ENCODE measurements at regions of chr4 and their contacts with region 1.

Region 1: GRCh38 chr4:105471566-105472176 is 2.2 kb downstream of the PPA2 start:
- DNase-seq: peak; percentile 38 to 87 (median 70)
- ATAC-seq: peak; percentile 25
- H3K4me3 ChIP-seq: no peak overlapping the region
- H3K4me3 Mint-ChIP-seq: peak overlapping the region; percentile 56
- H3K27ac ChIP-seq: no peak overlapping the region
- H3K27ac Mint-ChIP-seq: peak overlapping the region; percentile 38
- H3K4me1 ChIP-seq: peaks cover 32% of the 10 kb centered on the region
- H3K4me1 Mint-ChIP-seq: peaks cover 58% of the 10 kb centered on the region
- H3K27me3 ChIP-seq: no peaks in the 10 kb centered on the region
- H3K27me3 Mint-ChIP-seq: no peaks in the 10 kb centered on the region
- CTCF ChIP-seq: peak; percentile 74

Region 2: GRCh38 chr4:104868958-104869357 is 602.7 kb before region 1 on chr4:
- CTCF ChIA-PET with region 1: no interaction called
- POLR2A ChIA-PET with region 1: no interaction called
- intact Hi-C with region 1: loop called in 1 of 2 experiments (anchors 5 kb)
- DNase-seq: no peak
- ATAC-seq: no peak
- H3K4me3 ChIP-seq: no peak overlapping the region
- H3K4me3 Mint-ChIP-seq: no peak overlapping the region
- H3K27ac ChIP-seq: no peak overlapping the region
- H3K27ac Mint-ChIP-seq: no peak overlapping the region
- H3K4me1 ChIP-seq: no peaks in the 10 kb centered on the region
- H3K4me1 Mint-ChIP-seq: no peaks in the 10 kb centered on the region
- H3K27me3 ChIP-seq: no peaks in the 10 kb centered on the region
- H3K27me3 Mint-ChIP-seq: peaks cover 8% of the 10 kb centered on the region
- CTCF ChIP-seq: no peak

Region 3: DNA sequence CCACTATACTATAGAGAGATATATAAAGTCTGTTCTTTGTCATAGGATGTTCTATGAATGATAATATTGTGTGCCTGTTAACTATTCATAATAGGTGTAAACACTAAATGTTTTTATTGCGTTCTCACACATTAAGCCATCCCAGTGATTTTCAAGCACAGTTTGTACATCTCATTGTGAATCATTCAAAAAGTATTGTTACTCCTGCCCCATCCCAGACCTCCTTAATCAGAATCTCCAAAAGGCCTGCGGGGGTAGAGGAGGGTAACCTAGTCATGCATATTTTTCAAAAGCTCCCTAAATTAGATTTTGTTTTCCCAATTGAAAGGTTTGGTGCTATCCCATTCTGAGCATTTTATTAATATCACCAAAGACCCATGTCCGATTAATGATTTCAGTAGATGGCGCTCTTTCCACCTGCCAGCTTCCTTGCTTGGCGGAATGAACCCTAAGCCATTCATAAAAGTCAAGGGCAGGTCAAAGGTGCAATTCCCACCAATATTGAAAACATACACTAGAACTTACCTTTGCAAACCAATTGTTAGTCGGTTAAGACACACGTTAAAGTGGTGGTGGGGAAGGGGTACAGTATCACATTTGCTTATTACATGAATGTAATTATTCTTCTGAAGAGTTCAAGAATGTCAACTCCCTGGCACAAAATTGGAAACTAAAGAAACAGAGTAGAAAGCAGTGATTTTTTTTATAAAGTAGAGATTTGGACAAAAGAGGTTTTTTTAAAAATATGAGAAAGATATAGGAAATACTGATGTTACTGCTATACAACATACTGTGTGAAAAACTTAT is 330.8 kb before region 1 on chr4:
- CTCF ChIA-PET with region 1: interaction called, 26 read pairs
- POLR2A ChIA-PET with region 1: interaction called, 13 read pairs
- intact Hi-C with region 1: loop called (anchors 1 kb)
- DNase-seq: peak in 7 of 9 experiments; percentile 26 to 77 (median 44)
- ATAC-seq: no peak
- H3K4me3 ChIP-seq: no peak overlapping the region
- H3K4me3 Mint-ChIP-seq: no peak overlapping the region
- H3K27ac ChIP-seq: no peak overlapping the region
- H3K27ac Mint-ChIP-seq: no peak overlapping the region
- H3K4me1 ChIP-seq: peaks cover 6% of the 10 kb centered on the region
- H3K4me1 Mint-ChIP-seq: peaks cover 8% of the 10 kb centered on the region
- H3K27me3 ChIP-seq: no peaks in the 10 kb centered on the region
- H3K27me3 Mint-ChIP-seq: no peaks in the 10 kb centered on the region
- CTCF ChIP-seq: peak; percentile 59

Region 4: DNA sequence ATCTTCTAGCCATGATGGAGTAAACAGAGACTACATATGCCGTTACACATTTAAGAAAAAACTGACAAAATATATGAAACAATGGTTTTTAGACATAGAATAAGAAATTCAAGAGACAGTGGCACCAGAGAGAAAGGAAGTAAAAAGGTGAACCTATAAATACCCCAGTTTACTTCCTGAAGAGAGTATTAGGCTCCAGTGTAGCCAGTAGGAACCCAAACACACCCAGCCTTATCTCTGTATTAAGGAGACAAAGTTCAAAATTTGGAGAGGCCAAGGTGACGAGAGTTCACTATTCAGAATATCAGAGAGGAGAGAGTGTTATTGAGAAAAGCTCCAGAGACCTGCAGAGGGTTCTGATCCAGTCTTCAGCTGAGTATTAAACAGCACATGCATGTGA is 206.0 kb before region 1 on chr4:
- CTCF ChIA-PET with region 1: interaction called, 3 read pairs
- POLR2A ChIA-PET with region 1: no interaction called
- intact Hi-C with region 1: loop called in 1 of 2 experiments (anchors 10 kb)
- DNase-seq: no peak
- ATAC-seq: no peak
- H3K4me3 ChIP-seq: no peak overlapping the region
- H3K4me3 Mint-ChIP-seq: no peak overlapping the region
- H3K27ac ChIP-seq: no peak overlapping the region
- H3K27ac Mint-ChIP-seq: no peak overlapping the region
- H3K4me1 ChIP-seq: no peaks in the 10 kb centered on the region
- H3K4me1 Mint-ChIP-seq: peaks cover 4% of the 10 kb centered on the region
- H3K27me3 ChIP-seq: no peaks in the 10 kb centered on the region
- H3K27me3 Mint-ChIP-seq: no peaks in the 10 kb centered on the region
- CTCF ChIP-seq: no peak

Region 5: GRCh38 chr4:105460306-105460705 is 11.4 kb before region 1 on chr4:
- CTCF ChIA-PET with region 1: interaction called, 4 read pairs
- POLR2A ChIA-PET with region 1: interaction called, 4 read pairs
- intact Hi-C with region 1: loop called in 1 of 2 experiments (anchors 1 kb)
- DNase-seq: no peak
- ATAC-seq: no peak
- H3K4me3 ChIP-seq: no peak overlapping the region
- H3K4me3 Mint-ChIP-seq: no peak overlapping the region
- H3K27ac ChIP-seq: no peak overlapping the region
- H3K27ac Mint-ChIP-seq: no peak overlapping the region
- H3K4me1 ChIP-seq: no peaks in the 10 kb centered on the region
- H3K4me1 Mint-ChIP-seq: peaks cover 35% of the 10 kb centered on the region
- H3K27me3 ChIP-seq: no peaks in the 10 kb centered on the region
- H3K27me3 Mint-ChIP-seq: no peaks in the 10 kb centered on the region
- CTCF ChIP-seq: no peak

Region 6: GRCh38 chr4:106315968-106316772 is 844.5 kb after region 1 on chr4 and contains the starts of genes AIMP1 and TBCK:
- CTCF ChIA-PET with region 1: no interaction called
- POLR2A ChIA-PET with region 1: interaction called, 3 read pairs
- intact Hi-C with region 1: loop called (anchors 5 kb)
- DNase-seq: peak; percentile 81 to 95 (median 90)
- ATAC-seq: peak; percentile 85
- H3K4me3 ChIP-seq: peak within 1 kb of the TSS; percentile 72 to 85
- H3K4me3 Mint-ChIP-seq: no peak within 1 kb of the TSS
- H3K27ac ChIP-seq: peak within 1 kb of the TSS; percentile 89 to 96
- H3K27ac Mint-ChIP-seq: no peak within 1 kb of the TSS
- H3K4me1 ChIP-seq: peaks cover 19% of the 10 kb centered on the region
- H3K4me1 Mint-ChIP-seq: peaks cover 42% of the 10 kb centered on the region
- H3K27me3 ChIP-seq: no peaks in the 10 kb centered on the region
- H3K27me3 Mint-ChIP-seq: no peaks in the 10 kb centered on the region
- CTCF ChIP-seq: no peak
- total RNA-seq, gene AIMP1: 69.3 to 79.2 TPM
- total RNA-seq, gene TBCK: 17.4 to 20.4 TPM